ENCODE measurements at regions of chr6 and their contacts with region 1.

Region 1: GRCh38 chr6:170244721-170245474 is 46.0 kb downstream of the DLL1 start:
- DNase-seq: peak in 4 of 10 donors; percentile 21 to 84 (median 70)

Region 2: DNA sequence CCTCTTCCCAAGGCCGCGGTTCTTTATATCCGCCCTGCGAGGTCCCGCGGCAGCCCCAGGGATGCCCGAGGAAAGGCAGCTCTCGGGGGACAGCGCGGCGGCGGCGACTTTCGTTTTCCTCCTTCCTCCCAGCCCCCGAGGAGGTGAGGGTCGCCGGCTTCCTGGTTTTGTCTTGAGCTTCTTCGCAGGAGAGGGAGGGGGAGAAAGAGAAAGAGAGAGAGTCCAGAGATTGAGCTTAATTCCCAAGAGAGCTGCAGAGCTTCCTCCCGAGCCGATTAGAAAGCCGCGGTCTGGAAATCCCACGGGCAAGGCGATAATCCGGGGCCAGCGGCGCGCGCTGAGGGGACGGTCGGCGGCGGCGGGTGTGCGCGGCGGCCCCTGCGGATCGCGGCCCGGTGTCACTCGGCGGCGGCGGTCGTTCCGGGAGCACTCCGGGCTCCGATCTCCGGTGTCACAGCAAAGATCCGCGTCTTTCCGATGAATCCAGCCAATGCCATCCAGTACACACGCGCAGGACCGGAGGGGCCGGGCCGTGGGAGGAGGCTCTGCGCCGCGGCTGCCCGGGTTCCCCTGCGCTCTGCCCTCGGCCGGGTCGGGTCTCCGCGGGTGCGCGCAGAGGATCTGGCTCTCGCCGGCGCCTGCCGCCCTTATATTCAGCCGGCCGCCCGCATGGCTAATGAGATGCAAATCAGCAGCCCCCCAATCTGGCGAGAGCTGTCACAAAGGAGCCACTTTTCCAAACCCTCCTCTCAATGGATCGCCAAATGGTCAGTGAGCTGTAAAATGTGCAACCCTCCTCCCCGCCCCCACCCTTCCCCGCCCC is 45.6 kb after region 1 on chr6 and contains the start of gene DLL1:
- intact Hi-C with region 1: loop called (anchors 5 kb)
- DNase-seq: peak; percentile 80 to 98 (median 88)

Region 3: GRCh38 chr6:170405311-170405975 is 160.5 kb after region 1 on chr6:
- intact Hi-C with region 1: no loop called
- DNase-seq: no peak